Activated naive CD4-positive, alpha-beta T cell treated with anti-CD3 and anti-CD28 coated beads for 36 hours (primary cell): ENCODE measurements at regions of chr9 and their contacts with region 1.

Region 1: DNA sequence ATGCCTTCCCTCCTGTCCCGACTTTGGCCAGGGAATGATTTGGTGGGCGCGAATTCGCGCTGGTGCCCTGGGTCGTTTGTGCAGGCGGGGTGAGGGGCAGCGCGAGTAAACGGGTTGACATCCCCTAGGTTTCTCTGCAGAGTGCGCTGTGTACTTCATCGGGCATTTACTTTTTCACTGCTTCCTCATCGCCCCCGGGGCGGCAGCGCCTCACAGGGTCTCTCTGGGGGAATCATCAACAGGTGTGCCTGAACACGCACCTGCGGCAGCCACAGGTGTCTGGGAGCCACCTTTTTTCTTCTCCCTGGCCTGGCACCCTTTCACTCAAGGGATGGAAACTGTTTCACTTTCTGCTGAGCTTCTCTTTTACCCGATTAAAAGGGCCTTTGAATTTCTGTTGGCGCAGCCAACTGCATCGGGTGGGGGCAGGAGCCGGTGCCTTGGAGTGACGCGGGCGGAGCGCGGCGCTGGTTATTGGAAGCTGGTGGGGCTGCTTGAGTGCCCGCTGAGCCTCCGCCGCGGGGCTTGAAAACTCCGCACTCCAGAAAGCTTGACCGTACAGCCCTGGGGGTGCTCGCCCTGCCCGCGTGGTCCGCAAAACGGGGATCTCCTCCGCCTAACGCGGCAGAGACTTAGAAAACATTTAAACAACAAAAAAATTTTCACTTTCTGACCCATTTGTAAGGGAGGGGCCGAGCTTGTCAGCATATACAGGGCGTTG is 52.1 kb upstream of the TJP2 start:
- DNase-seq: peak; percentile 56
- H3K4me3 Mint-ChIP-seq: peak overlapping the region; percentile 87
- H3K27ac Mint-ChIP-seq: no peak overlapping the region
- H3K4me1 Mint-ChIP-seq: peaks cover 13% of the 10 kb centered on the region
- H3K27me3 Mint-ChIP-seq: no peaks in the 10 kb centered on the region

Region 2: DNA sequence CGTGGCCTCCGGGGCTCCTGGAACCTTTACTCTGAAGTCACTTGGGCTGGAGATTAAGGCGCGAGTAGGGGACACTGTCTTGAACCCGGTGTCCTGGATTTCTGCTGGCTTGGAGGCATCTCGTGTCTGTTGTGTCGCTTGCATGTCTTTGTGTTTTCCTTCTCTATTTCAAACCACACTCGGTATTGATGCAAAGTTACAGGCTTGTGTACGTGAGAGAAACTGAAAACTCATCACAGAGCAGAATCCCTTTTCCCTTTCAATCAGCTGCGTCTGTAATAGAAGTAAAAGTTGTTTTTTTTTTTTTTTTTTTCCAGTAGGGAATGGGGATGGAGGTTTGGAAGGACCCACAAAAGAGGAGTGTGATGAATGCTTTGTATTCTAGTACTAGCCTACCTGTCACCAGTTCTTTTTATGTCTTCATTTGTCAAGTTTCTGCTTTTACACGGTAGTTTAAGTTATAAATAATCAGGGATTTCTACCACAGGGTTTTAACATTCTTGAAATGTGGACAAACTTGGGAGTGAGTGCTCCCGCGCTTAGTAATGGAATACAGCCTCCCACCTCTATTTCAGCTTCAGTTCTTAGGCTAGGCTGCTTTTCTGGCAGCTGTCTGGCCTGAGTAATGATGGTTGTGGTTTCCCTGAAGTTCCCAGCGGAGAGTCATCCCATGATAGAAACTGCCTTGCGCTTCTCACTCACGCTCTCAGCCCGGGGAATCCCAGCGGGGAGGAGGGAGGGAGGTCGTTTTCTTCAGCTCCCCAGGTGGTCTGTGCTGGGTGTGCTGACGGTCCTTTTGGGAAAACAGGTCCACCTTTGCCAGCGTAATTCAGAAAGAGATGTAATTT is 52.9 kb after region 1 on chr9:
- CTCF ChIA-PET with region 1: no interaction called
- intact Hi-C with region 1: loop called (anchors 5 kb)
- DNase-seq: peak; percentile 84
- H3K4me3 Mint-ChIP-seq: peak overlapping the region; percentile 77
- H3K27ac Mint-ChIP-seq: peak overlapping the region; percentile 37
- H3K4me1 Mint-ChIP-seq: peaks cover 39% of the 10 kb centered on the region
- H3K27me3 Mint-ChIP-seq: peaks cover 43% of the 10 kb centered on the region